Naive thymus-derived CD4-positive, alpha-beta T cell (primary cell): ENCODE measurements at regions of chr4 and their contacts with region 1.

Region 1: GRCh38 chr4:98601708-98602107 is 56.7 kb downstream of the TSPAN5 start:
- DNase-seq: no peak
- ATAC-seq: no peak
- H3K4me3 ChIP-seq: no peak overlapping the region
- H3K4me3 Mint-ChIP-seq: peak overlapping the region in 7 of 10 donors; percentile 1 to 70 (median 29)
- H3K27ac ChIP-seq: no peak overlapping the region
- H3K27ac Mint-ChIP-seq: peak overlapping the region in 6 of 9 donors; percentile 0 to 50 (median 18)
- H3K4me1 ChIP-seq: peaks cover 0 to 27% of the 10 kb centered on the region in 2 donors
- H3K4me1 Mint-ChIP-seq: peaks cover 18 to 47% (median 44%) of the 10 kb centered on the region in 7 donors
- H3K27me3 ChIP-seq: no peaks in the 10 kb centered on the region
- H3K27me3 Mint-ChIP-seq: no peaks in the 10 kb centered on the region

Region 2: GRCh38 chr4:98482847-98483806 is 118.6 kb before region 1 on chr4:
- CTCF ChIA-PET with region 1: no interaction called
- POLR2A ChIA-PET with region 1: no interaction called
- intact Hi-C with region 1: loop called in 1 of 2 experiments (anchors 2 kb)
- DNase-seq: peak in 1 of 9 donors; percentile 58
- ATAC-seq: no peak
- H3K4me3 ChIP-seq: no peak overlapping the region
- H3K4me3 Mint-ChIP-seq: peak overlapping the region in 5 of 10 donors; percentile 14 to 67 (median 24)
- H3K27ac ChIP-seq: no peak overlapping the region
- H3K27ac Mint-ChIP-seq: peak overlapping the region in 7 of 9 donors; percentile 25 to 91 (median 60)
- H3K4me1 ChIP-seq: no peaks in the 10 kb centered on the region
- H3K4me1 Mint-ChIP-seq: peaks cover 6 to 84% (median 41%) of the 10 kb centered on the region in 7 donors
- H3K27me3 ChIP-seq: no peaks in the 10 kb centered on the region
- H3K27me3 Mint-ChIP-seq: no peaks in the 10 kb centered on the region

Region 3: DNA sequence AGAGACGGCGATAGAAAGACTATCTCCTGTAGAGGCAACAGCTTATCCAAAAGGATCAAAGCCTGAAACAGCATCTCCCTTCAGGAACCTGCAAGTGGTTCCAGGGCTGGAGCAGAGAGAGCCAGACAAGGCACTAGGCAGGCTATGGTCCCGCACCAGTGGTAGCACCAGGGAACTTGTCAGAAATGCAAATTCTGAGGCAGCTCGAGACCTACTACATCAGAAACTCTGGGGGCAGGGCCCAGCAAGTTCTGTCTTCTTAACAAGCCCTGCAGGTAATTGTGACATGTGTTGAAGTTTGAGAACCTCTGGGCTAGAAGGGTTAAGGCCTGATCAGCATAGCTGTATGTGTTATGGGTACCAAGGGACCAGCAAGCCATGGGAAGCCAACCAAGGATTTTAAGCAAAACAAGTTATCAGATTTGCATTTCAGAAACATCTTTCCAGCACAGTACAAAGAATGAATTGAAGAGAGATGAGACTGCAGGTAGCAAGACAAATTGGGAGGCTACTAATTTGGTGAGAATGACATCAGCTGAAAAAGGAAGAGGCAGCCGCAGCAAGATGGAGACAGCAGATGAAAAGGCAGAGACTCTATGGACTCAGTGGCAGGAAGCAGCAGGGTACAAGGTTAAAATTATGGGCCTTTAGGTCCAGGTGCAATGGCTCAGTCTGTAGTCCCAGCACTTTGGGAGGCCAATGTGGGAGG is 83.0 kb before region 1 on chr4:
- CTCF ChIA-PET with region 1: no interaction called
- POLR2A ChIA-PET with region 1: no interaction called
- intact Hi-C with region 1: loop called in 1 of 2 experiments (anchors 5 kb)
- DNase-seq: no peak
- ATAC-seq: peak; percentile 36
- H3K4me3 ChIP-seq: no peak overlapping the region
- H3K4me3 Mint-ChIP-seq: no peak overlapping the region
- H3K27ac ChIP-seq: no peak overlapping the region
- H3K27ac Mint-ChIP-seq: peak overlapping the region in 1 of 9 donors; percentile 2
- H3K4me1 ChIP-seq: no peaks in the 10 kb centered on the region
- H3K4me1 Mint-ChIP-seq: peaks cover 21 to 71% (median 29%) of the 10 kb centered on the region in 7 donors
- H3K27me3 ChIP-seq: no peaks in the 10 kb centered on the region
- H3K27me3 Mint-ChIP-seq: no peaks in the 10 kb centered on the region

Region 4: GRCh38 chr4:98584265-98584664 is 17.4 kb before region 1 on chr4:
- CTCF ChIA-PET with region 1: no interaction called
- POLR2A ChIA-PET with region 1: no interaction called
- intact Hi-C with region 1: loop called in 1 of 2 experiments (anchors 2 kb)
- DNase-seq: no peak
- ATAC-seq: no peak
- H3K4me3 ChIP-seq: no peak overlapping the region
- H3K4me3 Mint-ChIP-seq: no peak overlapping the region
- H3K27ac ChIP-seq: no peak overlapping the region
- H3K27ac Mint-ChIP-seq: no peak overlapping the region
- H3K4me1 ChIP-seq: no peaks in the 10 kb centered on the region
- H3K4me1 Mint-ChIP-seq: peaks cover 15 to 42% (median 30%) of the 10 kb centered on the region in 7 donors
- H3K27me3 ChIP-seq: no peaks in the 10 kb centered on the region
- H3K27me3 Mint-ChIP-seq: no peaks in the 10 kb centered on the region

Region 5: GRCh38 chr4:98639523-98639922 is 37.8 kb after region 1 on chr4:
- CTCF ChIA-PET with region 1: no interaction called
- POLR2A ChIA-PET with region 1: no interaction called
- intact Hi-C with region 1: loop called in 1 of 2 experiments (anchors 1 kb)
- DNase-seq: peak in 7 of 9 donors; percentile 10 to 32 (median 15)
- ATAC-seq: peak; percentile 63
- H3K4me3 ChIP-seq: peak overlapping the region; percentile 36
- H3K4me3 Mint-ChIP-seq: peak overlapping the region; percentile 37 to 93 (median 82)
- H3K27ac ChIP-seq: peak overlapping the region; percentile 49
- H3K27ac Mint-ChIP-seq: peak overlapping the region; percentile 79 to 97 (median 87)
- H3K4me1 ChIP-seq: peaks cover 8 to 22% of the 10 kb centered on the region in 2 donors
- H3K4me1 Mint-ChIP-seq: peaks cover 30 to 56% (median 42%) of the 10 kb centered on the region in 7 donors
- H3K27me3 ChIP-seq: no peaks in the 10 kb centered on the region
- H3K27me3 Mint-ChIP-seq: no peaks in the 10 kb centered on the region